K562 (cell line): ENCODE measurements at regions of chr7 and their contacts with region 1.

Region 1: GRCh38 chr7:104156842-104157277 is 51.0 kb downstream of the ORC5 start:
- DNase-seq: peak in 2 of 4 experiments; percentile 22 to 58
- ATAC-seq: peak; percentile 72; the same call in 2 of the 3 replicates
- H3K4me3 ChIP-seq: no peak overlapping the region
- H3K27ac ChIP-seq: no peak overlapping the region
- H3K4me1 ChIP-seq: no peaks in the 10 kb centered on the region
- H3K27me3 ChIP-seq: no peaks in the 10 kb centered on the region
- CTCF ChIP-seq: peak; percentile 54 to 75 (median 56)
- EP300 ChIP-seq: no peak
- POLR2A ChIP-seq: no peak
- RAD21 ChIP-seq: peak; percentile 88 to 91

Region 2: DNA sequence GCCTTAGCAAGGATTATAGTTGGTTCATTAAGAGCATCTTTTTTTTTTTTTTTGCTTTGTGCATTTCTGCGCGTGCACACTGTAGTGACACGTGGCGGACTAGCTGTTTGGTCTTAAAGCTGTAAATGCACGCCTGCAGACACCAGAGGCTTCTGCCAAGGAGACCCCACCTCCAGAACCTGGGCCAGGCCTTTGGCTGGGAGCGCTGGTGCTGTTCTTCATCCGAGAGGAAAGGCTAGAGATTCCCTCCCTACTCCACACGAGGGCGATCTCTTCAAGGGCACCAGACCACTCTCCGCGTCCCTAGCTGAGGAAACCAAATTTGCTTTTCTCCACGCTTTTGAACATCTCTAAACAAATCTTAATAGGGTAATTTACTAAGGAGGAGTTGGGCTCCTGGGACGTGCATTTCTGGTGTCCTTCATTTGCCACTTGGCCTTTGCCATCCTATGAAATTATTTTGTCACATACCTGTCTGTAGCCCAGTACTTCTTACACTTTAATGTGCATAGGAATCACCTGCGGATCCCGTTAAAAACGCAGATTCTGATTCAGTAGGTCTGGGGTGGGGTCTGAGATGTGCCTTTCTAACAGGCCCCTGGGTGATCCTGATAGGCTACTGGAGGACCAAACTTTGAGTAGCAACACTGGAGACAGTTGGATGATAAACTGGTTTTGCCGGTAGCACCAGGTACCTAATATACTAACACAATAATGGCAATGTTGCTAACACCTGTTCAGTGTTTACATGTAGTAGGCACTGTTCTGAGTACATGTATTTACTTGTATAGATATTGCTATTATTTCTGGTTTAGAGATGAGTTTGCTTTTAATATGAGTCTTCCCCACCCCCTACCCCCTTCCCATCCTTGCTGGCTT is 709.5 kb before region 1 on chr7:
- CTCF ChIA-PET with region 1: interaction called, 5 read pairs
- POLR2A ChIA-PET with region 1: no interaction called
- in situ Hi-C with region 1: no loop called
- intact Hi-C with region 1: loop called (anchors 1 kb)
- DNase-seq: peak; percentile 78 to 84 (median 80)
- ATAC-seq: peak; percentile 97
- H3K4me3 ChIP-seq: no peak overlapping the region
- H3K27ac ChIP-seq: no peak overlapping the region
- H3K4me1 ChIP-seq: peaks cover 9 to 14% of the 10 kb centered on the region in 2 experiments; a peak in 4 of 5 replicates
- H3K27me3 ChIP-seq: peaks cover 29 to 34% of the 10 kb centered on the region in 2 experiments
- CTCF ChIP-seq: peak; percentile 85 to 94 (median 92)
- EP300 ChIP-seq: no peak
- POLR2A ChIP-seq: no peak
- RAD21 ChIP-seq: peak; percentile 72 to 91

Region 3: DNA sequence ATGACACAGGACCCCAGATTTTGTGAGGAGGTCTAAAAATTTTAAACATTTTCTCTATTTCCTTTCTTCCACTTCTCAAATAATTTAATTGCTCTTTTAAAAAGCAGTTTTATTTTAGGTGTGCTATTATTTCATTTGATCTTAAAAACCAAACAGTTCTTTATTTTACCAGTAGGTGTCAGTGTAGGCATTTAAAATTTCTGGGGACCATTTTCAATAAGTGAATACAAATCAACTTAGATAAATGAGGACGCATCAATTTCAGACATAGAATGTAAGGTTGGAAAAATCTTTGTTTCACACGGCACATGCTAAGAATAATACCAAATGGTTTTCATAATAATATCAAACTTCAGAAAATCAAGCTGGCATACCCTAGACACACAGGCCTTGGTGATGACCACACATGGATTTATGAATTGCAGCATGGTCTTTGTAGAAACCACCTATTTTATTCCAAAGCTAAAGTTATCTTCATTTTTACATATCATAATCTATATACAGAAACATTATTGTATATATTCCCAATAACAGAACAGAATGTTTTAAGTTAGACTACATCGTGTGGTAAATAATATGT is 583.3 kb before region 1 on chr7:
- CTCF ChIA-PET with region 1: interaction called, 52 read pairs
- POLR2A ChIA-PET with region 1: no interaction called
- in situ Hi-C with region 1: loop called (anchors 5 kb)
- intact Hi-C with region 1: loop called (anchors 1 kb)
- DNase-seq: peak; percentile 29 to 48 (median 34)
- ATAC-seq: peak; percentile 46; the same call in 1 of the 3 replicates
- H3K4me3 ChIP-seq: no peak overlapping the region
- H3K27ac ChIP-seq: no peak overlapping the region
- H3K4me1 ChIP-seq: no peaks in the 10 kb centered on the region
- H3K27me3 ChIP-seq: no peaks in the 10 kb centered on the region
- CTCF ChIP-seq: peak in 2 of 3 experiments; percentile 50 to 82; a peak in 3 of 6 replicates
- EP300 ChIP-seq: no peak
- POLR2A ChIP-seq: no peak
- RAD21 ChIP-seq: peak; percentile 90 to 95

Region 4: GRCh38 chr7:103766660-103767059 is 390.2 kb before region 1 on chr7:
- CTCF ChIA-PET with region 1: no interaction called
- POLR2A ChIA-PET with region 1: no interaction called
- in situ Hi-C with region 1: no loop called
- intact Hi-C with region 1: loop called (anchors 10 kb)
- DNase-seq: no peak
- ATAC-seq: no peak
- H3K4me3 ChIP-seq: no peak overlapping the region
- H3K27ac ChIP-seq: no peak overlapping the region
- H3K4me1 ChIP-seq: no peaks in the 10 kb centered on the region
- H3K27me3 ChIP-seq: no peaks in the 10 kb centered on the region
- CTCF ChIP-seq: no peak
- EP300 ChIP-seq: no peak
- POLR2A ChIP-seq: no peak
- RAD21 ChIP-seq: no peak

Region 5: GRCh38 chr7:103996639-103997038 is 160.2 kb before region 1 on chr7:
- CTCF ChIA-PET with region 1: no interaction called
- POLR2A ChIA-PET with region 1: no interaction called
- in situ Hi-C with region 1: loop called (anchors 10 kb)
- intact Hi-C with region 1: loop called (anchors 1 kb)
- DNase-seq: peak in 1 of 4 experiments; percentile 24
- ATAC-seq: no peak
- H3K4me3 ChIP-seq: no peak overlapping the region
- H3K27ac ChIP-seq: peak overlapping the region; percentile 51
- H3K4me1 ChIP-seq: peaks cover 5 to 44% of the 10 kb centered on the region in 2 experiments
- H3K27me3 ChIP-seq: no peaks in the 10 kb centered on the region
- CTCF ChIP-seq: no peak
- EP300 ChIP-seq: no peak
- POLR2A ChIP-seq: no peak
- RAD21 ChIP-seq: no peak

Region 6: GRCh38 chr7:104074529-104074928 is 82.3 kb before region 1 on chr7:
- CTCF ChIA-PET with region 1: no interaction called
- POLR2A ChIA-PET with region 1: no interaction called
- in situ Hi-C with region 1: no loop called
- intact Hi-C with region 1: no loop called
- DNase-seq: no peak
- ATAC-seq: no peak
- H3K4me3 ChIP-seq: no peak overlapping the region
- H3K27ac ChIP-seq: no peak overlapping the region
- H3K4me1 ChIP-seq: no peaks in the 10 kb centered on the region; a peak in 2 of 5 replicates
- H3K27me3 ChIP-seq: no peaks in the 10 kb centered on the region
- CTCF ChIP-seq: no peak
- EP300 ChIP-seq: no peak
- POLR2A ChIP-seq: no peak
- RAD21 ChIP-seq: no peak

Region 7: DNA sequence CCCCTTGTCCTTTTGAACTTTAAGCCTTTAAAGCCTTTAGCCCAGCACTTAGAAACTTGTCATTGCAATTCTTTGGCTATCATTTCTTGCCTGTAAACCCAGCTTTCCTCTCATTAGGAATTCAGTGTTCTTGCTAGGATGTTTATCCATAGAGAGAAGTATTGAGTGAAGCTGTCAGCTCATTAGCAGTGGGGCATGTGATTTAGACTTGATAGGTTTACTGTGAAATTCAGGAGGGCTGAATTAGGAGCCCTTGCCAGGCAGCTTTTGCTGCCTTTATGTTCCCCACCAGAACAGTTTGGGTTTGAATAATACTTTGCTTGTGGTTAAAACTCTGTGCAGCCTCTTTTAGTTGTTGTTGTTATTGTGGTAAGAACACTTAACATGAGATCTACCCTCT is 211.1 kb after region 1 on chr7:
- CTCF ChIA-PET with region 1: no interaction called
- POLR2A ChIA-PET with region 1: no interaction called
- in situ Hi-C with region 1: no loop called
- intact Hi-C with region 1: no loop called
- DNase-seq: no peak
- ATAC-seq: no peak
- H3K4me3 ChIP-seq: no peak overlapping the region
- H3K27ac ChIP-seq: no peak overlapping the region
- H3K4me1 ChIP-seq: no peaks in the 10 kb centered on the region
- H3K27me3 ChIP-seq: peaks cover 0 to 6% of the 10 kb centered on the region in 2 experiments; a peak in 2 of 5 replicates
- CTCF ChIP-seq: no peak
- EP300 ChIP-seq: no peak
- POLR2A ChIP-seq: no peak
- RAD21 ChIP-seq: no peak